Dendritic cell treated with granulocyte-macrophage colony-stimulating factor and Interleukin-4, amounts not matched to agents 40 ng/mL and 50 ng/mL, for 4 days (primary cell): ENCODE measurements at regions of chr10 and their contacts with region 1.

Region 1: GRCh38 chr10:27536437-27536836 is 32.3 kb downstream of the RAB18 start:
- H3K4me3 Mint-ChIP-seq: no peak overlapping the region
- H3K27ac Mint-ChIP-seq: no peak overlapping the region
- H3K4me1 Mint-ChIP-seq: peaks cover 3% of the 10 kb centered on the region
- H3K27me3 Mint-ChIP-seq: no peaks in the 10 kb centered on the region

Region 2: DNA sequence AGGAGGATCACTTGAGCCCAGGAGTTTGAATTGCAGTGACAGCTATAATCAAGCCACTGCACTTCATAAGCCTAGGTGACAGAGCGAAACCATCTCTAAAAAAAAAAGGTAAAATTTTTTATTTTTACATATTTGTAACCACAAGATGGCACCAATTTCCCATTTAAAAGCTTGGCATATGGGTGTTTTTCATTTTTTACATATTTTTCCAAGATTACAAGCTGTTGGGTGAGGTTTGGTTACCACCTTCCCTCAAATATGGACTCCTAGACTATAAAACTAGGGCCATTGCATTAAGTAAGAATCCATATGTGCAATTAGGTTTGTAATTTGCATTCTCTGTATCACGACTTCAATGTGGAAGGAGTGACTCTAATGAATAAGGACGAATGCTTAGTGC is 166.6 kb before region 1 on chr10:
- intact Hi-C with region 1: loop called (anchors 10 kb)
- H3K4me3 Mint-ChIP-seq: no peak overlapping the region
- H3K27ac Mint-ChIP-seq: no peak overlapping the region
- H3K4me1 Mint-ChIP-seq: no peaks in the 10 kb centered on the region
- H3K27me3 Mint-ChIP-seq: peaks cover 3% of the 10 kb centered on the region

Region 3: DNA sequence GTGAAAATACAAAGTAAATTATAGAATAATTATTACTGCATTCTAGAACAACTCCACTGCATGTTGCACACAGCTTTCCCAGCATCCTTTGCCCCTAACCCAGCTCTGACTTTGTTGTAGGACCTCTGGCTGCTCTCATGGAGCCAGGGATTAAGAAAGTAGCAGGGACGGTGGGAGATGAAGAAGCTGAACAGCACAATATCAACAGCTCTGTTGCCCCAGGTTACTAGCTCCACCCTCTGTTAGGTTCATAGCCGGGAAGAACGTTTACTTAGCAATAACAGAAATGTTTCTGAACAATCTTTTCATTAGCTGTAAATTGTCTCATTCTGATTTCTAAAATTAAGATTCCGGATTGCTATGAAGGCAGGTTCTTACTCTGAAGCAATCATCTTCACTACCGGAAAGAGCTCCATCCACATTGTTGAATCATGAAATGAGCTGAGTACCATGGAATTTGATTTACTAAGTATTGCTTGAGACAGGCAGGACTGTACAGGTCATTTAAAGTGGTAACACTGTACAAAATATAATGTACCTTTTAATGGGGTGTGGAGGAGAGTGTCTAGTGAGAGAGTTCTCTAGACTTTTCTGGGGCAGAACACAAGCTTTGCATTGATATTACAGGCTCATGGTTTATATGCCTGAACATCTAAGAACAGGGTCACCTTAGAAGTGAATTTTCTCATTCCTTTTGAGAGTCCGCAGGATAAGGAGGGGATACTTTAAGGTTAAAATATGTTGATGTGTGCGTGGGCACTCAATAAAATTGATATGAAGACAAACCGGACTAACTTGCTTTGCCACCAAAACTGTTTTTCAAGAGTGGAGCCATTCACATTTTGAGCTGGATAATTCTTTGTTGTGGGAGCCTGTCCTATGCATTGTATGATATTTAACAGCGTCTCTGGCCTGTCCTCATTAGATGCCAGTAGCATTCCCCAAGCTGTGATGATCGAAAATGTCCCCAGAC is 53.2 kb before region 1 on chr10:
- intact Hi-C with region 1: no loop called
- H3K4me3 Mint-ChIP-seq: no peak overlapping the region
- H3K27ac Mint-ChIP-seq: no peak overlapping the region
- H3K4me1 Mint-ChIP-seq: peaks cover 19% of the 10 kb centered on the region
- H3K27me3 Mint-ChIP-seq: no peaks in the 10 kb centered on the region

Region 4: GRCh38 chr10:27494116-27494805 is 42.2 kb before region 1 on chr10:
- intact Hi-C with region 1: no loop called
- H3K4me3 Mint-ChIP-seq: no peak overlapping the region
- H3K27ac Mint-ChIP-seq: no peak overlapping the region
- H3K4me1 Mint-ChIP-seq: no peaks in the 10 kb centered on the region
- H3K27me3 Mint-ChIP-seq: no peaks in the 10 kb centered on the region